ENCODE measurements at regions of chr11 and their contacts with region 1.

Region 1: GRCh38 chr11:62726915-62727763 is at the start of gene HNRNPUL2:
- DNase-seq: peak; percentile 94 to 97
- H3K4me3 ChIP-seq: peak within 1 kb of the TSS; percentile 87 to 98 (median 96)
- H3K27ac ChIP-seq: peak within 1 kb of the TSS; percentile 92
- H3K4me1 ChIP-seq: no peaks in the 10 kb centered on the region; a peak in 3 of 7 replicates
- H3K27me3 ChIP-seq: no peaks in the 10 kb centered on the region
- CTCF ChIP-seq: no peak
- EP300 ChIP-seq: 0 out of 3 replicates have a peak, but pooled peaks of 1 of the 2 experiments have one; percentile 25
- POLR2A ChIP-seq: peak; percentile 90
- RAD21 ChIP-seq: no peak
- total RNA-seq, gene HNRNPUL2: 44.3 and 46.4 TPM in 2 replicates

Region 2: DNA sequence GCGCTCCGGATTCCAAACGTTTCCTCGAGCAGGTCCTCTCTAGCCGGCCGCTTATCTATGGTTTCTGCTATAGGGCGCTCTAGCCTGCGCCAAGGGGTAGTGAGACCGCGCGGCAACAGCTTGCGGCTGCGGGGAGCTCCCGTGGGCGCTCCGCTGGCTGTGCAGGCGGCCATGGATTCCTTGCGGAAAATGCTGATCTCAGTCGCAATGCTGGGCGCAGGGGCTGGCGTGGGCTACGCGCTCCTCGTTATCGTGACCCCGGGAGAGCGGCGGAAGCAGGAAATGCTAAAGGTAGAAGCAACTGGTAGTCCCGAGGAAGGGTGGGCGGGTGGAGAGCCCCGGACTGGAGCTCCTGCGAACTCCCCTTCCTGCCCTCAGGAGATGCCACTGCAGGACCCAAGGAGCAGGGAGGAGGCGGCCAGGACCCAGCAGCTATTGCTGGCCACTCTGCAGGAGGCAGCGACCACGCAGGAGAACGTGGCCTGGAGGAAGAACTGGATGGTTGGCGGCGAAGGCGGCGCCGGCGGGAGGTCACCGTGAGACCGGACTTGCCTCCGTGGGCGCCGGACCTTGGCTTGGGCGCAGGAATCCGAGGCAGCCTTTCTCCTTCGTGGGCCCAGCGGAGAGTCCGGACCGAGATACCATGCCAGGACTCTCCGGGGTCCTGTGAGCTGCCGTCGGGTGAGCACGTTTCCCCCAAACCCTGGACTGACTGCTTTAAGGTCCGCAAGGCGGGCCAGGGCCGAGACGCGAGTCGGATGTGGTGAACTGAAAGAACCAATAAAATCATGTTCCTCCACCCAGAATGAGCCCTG is 55.4 kb before region 1 on chr11 and contains the starts of genes LBHD1 and UQCC3:
- CTCF ChIA-PET with region 1: interaction called, 3 read pairs
- POLR2A ChIA-PET with region 1: interaction called, 2,041 read pairs
- DNase-seq: peak; percentile 41 to 88
- H3K4me3 ChIP-seq: peak within 1 kb of the TSS; percentile 88 to 97 (median 92)
- H3K27ac ChIP-seq: peak within 1 kb of the TSS; percentile 63
- H3K4me1 ChIP-seq: peaks cover 2 to 8% (median 2%) of the 10 kb centered on the region in 4 experiments; a peak in 5 of 7 replicates
- H3K27me3 ChIP-seq: no peaks in the 10 kb centered on the region
- CTCF ChIP-seq: no peak
- EP300 ChIP-seq: no peak
- POLR2A ChIP-seq: peak in 1 of 2 experiments; percentile 71; a peak in 2 of 3 replicates
- RAD21 ChIP-seq: peak in 1 of 2 experiments; percentile 1; a peak in 1 of 4 replicates
- total RNA-seq, gene LBHD1: 3.6 and 5.2 TPM in 2 replicates
- total RNA-seq, gene UQCC3: 14.2 and 15.2 TPM in 2 replicates

Region 3: GRCh38 chr11:62713343-62713742 is 13.8 kb before region 1 on chr11:
- CTCF ChIA-PET with region 1: interaction called, 10 read pairs
- POLR2A ChIA-PET with region 1: interaction called, 120 read pairs
- DNase-seq: no peak
- H3K4me3 ChIP-seq: no peak overlapping the region
- H3K27ac ChIP-seq: peak overlapping the region; percentile 13; the same call in 1 of the 2 replicates
- H3K4me1 ChIP-seq: peaks cover 0 to 27% (median 11%) of the 10 kb centered on the region in 4 experiments; a peak in 6 of 7 replicates
- H3K27me3 ChIP-seq: no peaks in the 10 kb centered on the region; a peak in 1 of 7 replicates
- CTCF ChIP-seq: no peak
- EP300 ChIP-seq: no peak
- POLR2A ChIP-seq: no peak
- RAD21 ChIP-seq: no peak

Region 4: DNA sequence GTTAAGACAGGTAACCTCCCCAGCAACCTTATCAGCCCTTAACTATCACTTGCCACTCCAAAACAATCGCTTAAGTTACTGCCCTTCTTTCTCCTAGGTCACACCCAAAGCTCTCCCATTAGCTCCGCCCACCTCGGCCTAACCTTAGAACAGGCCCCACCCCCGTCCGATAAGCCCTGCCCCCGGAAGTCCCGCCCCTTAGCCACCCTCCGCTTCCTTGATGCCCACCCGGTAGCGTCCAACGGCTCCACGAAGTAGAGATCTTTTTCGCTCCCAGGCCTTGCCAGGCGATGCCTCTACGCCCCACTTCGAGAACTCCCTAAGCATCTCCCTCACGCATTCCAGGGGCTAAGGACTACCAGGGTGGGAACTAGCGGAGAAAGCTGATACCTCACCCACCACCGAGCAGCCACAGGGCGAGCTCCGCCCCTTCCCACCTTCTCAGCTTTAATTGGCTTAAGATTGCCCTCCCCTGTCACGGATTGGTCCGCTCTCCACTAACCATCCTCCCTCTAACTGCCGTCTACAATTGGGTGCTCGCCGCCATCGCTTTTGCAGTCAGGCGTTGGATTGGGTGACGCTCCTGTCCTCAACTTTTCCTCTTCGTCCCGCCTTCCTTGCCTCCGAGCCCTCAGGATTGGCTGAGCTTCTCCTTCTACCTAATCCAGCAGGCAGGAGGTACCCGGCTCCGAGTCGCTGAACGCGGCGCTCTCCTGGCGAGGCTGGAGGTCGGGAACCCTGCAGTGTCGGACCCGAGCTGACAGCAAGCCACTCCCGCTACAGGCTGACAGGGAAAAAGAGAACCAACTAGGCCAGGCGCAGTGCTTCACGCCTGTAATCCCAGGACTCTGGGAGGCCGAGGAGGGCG is 26.8 kb after region 1 on chr11 and contains the start of gene ZBTB3:
- CTCF ChIA-PET with region 1: interaction called, 6 read pairs
- POLR2A ChIA-PET with region 1: interaction called, 192 read pairs
- DNase-seq: peak; percentile 97 to 99
- H3K4me3 ChIP-seq: peak within 1 kb of the TSS; percentile 74 to 89 (median 82)
- H3K27ac ChIP-seq: peak within 1 kb of the TSS; percentile 86
- H3K4me1 ChIP-seq: peaks cover 4 to 9% (median 6%) of the 10 kb centered on the region in 4 experiments
- H3K27me3 ChIP-seq: no peaks in the 10 kb centered on the region
- CTCF ChIP-seq: no peak
- EP300 ChIP-seq: no peak
- POLR2A ChIP-seq: peak; percentile 37 to 79
- RAD21 ChIP-seq: 0 out of 4 replicates have a peak, but pooled peaks of 1 of the 2 experiments have one; percentile 6
- total RNA-seq, gene ZBTB3: 76.5 and 76.9 TPM in 2 replicates

Region 5: GRCh38 chr11:62816557-62816956 is 89.4 kb after region 1 on chr11:
- CTCF ChIA-PET with region 1: no interaction called
- POLR2A ChIA-PET with region 1: no interaction called
- DNase-seq: no peak
- H3K4me3 ChIP-seq: no peak overlapping the region
- H3K27ac ChIP-seq: no peak overlapping the region
- H3K4me1 ChIP-seq: no peaks in the 10 kb centered on the region
- H3K27me3 ChIP-seq: no peaks in the 10 kb centered on the region
- CTCF ChIP-seq: no peak
- EP300 ChIP-seq: no peak
- POLR2A ChIP-seq: no peak
- RAD21 ChIP-seq: no peak

Measured in H1 (cell line).